T-cell (primary cell): ENCODE measurements at regions of chr20 and their contacts with region 1.

Region 1: GRCh38 chr20:58870239-58871014 is 17.9 kb downstream of the GNAS start:
- DNase-seq: peak in 16 of 35 experiments; percentile 27 to 73 (median 44)
- ATAC-seq: peak; percentile 79 to 83 (median 80)
- H3K4me3 ChIP-seq: no peak overlapping the region
- H3K4me3 Mint-ChIP-seq: no peak overlapping the region
- H3K27ac ChIP-seq: no peak overlapping the region
- H3K27ac Mint-ChIP-seq: no peak overlapping the region
- H3K4me1 ChIP-seq: no peaks in the 10 kb centered on the region
- H3K4me1 Mint-ChIP-seq: peaks cover 0 to 6% (median 5%) of the 10 kb centered on the region in 3 donors
- H3K27me3 ChIP-seq: peaks cover 0 to 4% of the 10 kb centered on the region in 2 experiments
- H3K27me3 Mint-ChIP-seq: peaks cover 2 to 4% of the 10 kb centered on the region in 2 donors

Region 2: DNA sequence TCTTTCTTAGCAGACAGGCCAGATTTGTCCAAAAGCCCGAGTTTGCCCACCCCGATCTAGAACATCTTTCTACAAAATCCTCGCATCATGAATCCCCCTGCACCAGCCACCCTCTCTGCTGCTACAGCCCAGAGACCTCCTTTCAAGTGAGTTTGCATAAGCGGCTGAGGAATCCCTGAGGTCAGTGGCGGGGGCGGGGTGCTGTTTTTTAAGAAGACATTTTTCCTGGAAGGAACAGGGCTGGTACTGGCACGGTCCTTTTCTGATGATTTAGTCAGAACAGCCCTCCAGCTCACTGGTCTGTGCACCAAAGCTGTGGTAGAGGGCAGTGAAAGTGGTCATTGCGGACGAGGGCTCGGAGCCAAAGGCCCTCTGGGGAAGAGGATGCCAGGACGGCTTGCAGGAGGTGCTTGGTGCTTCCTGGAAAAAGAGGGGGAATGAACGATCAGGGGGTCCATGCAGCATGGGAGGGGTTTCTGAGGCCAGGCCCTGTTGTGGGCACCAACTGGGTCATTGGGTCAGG is 70.2 kb before region 1 on chr20:
- CTCF ChIA-PET with region 1: no interaction called
- POLR2A ChIA-PET with region 1: no interaction called
- DNase-seq: no peak
- ATAC-seq: no peak
- H3K4me3 ChIP-seq: no peak overlapping the region
- H3K4me3 Mint-ChIP-seq: no peak overlapping the region
- H3K27ac ChIP-seq: no peak overlapping the region
- H3K27ac Mint-ChIP-seq: no peak overlapping the region
- H3K4me1 ChIP-seq: no peaks in the 10 kb centered on the region
- H3K4me1 Mint-ChIP-seq: no peaks in the 10 kb centered on the region
- H3K27me3 ChIP-seq: peaks cover 0 to 46% of the 10 kb centered on the region in 2 experiments
- H3K27me3 Mint-ChIP-seq: peaks cover 30 to 36% of the 10 kb centered on the region in 2 donors

Region 3: DNA sequence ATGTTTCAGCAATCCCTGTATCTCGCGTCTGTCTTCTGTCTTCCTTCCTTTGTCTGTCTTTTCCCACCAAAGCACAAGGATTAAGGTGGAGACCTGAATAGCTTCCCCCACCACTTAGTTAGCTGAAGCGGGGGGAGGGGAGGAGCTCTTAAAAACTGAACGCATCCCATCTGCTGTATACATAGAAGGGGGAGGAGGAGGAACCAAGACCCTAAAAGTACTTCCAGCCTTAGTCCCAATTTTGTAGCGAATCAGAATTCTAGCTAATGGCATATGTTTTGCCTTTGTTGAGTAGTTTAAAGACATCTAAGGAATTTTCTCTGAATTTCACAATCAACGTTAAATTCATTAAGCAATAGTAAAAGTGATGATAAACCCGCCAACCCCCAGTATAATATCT is 30.0 kb after region 1 on chr20:
- CTCF ChIA-PET with region 1: no interaction called
- POLR2A ChIA-PET with region 1: no interaction called
- DNase-seq: no peak
- ATAC-seq: no peak
- H3K4me3 ChIP-seq: no peak overlapping the region
- H3K4me3 Mint-ChIP-seq: no peak overlapping the region
- H3K27ac ChIP-seq: no peak overlapping the region
- H3K27ac Mint-ChIP-seq: no peak overlapping the region
- H3K4me1 ChIP-seq: peaks cover 6 to 15% of the 10 kb centered on the region in 2 experiments
- H3K4me1 Mint-ChIP-seq: peaks cover 77 to 84% (median 82%) of the 10 kb centered on the region in 3 donors
- H3K27me3 ChIP-seq: no peaks in the 10 kb centered on the region
- H3K27me3 Mint-ChIP-seq: no peaks in the 10 kb centered on the region

Region 4: DNA sequence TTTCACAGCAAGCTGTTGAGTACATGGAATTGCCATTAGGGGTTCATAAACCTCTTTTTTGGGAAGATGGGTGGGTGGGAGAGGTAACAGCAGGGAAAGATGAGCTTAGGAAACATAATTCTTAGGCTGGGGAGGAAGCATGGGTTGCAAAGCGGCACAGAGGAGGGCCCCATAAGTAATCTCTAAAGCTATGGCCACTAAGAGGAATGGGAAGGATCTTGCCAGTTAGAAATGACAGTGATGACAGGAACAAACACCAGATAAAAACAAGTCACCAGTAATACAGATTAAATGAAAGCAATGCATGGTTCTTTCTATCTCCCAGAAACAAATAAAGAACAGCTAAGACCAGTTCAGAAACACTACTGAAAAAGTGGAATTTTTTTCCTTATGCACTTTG is 203.2 kb after region 1 on chr20:
- CTCF ChIA-PET with region 1: interaction called in 1 of 2 experiments, 5 read pairs
- POLR2A ChIA-PET with region 1: interaction called in 1 of 2 experiments, 11 read pairs
- DNase-seq: no peak
- ATAC-seq: no peak
- H3K4me3 ChIP-seq: no peak overlapping the region
- H3K4me3 Mint-ChIP-seq: no peak overlapping the region
- H3K27ac ChIP-seq: no peak overlapping the region
- H3K27ac Mint-ChIP-seq: no peak overlapping the region
- H3K4me1 ChIP-seq: no peaks in the 10 kb centered on the region
- H3K4me1 Mint-ChIP-seq: peaks cover 0 to 6% (median 4%) of the 10 kb centered on the region in 3 donors
- H3K27me3 ChIP-seq: peaks cover 2 to 19% of the 10 kb centered on the region in 2 experiments
- H3K27me3 Mint-ChIP-seq: peaks cover 24 to 36% of the 10 kb centered on the region in 2 donors

Region 5: DNA sequence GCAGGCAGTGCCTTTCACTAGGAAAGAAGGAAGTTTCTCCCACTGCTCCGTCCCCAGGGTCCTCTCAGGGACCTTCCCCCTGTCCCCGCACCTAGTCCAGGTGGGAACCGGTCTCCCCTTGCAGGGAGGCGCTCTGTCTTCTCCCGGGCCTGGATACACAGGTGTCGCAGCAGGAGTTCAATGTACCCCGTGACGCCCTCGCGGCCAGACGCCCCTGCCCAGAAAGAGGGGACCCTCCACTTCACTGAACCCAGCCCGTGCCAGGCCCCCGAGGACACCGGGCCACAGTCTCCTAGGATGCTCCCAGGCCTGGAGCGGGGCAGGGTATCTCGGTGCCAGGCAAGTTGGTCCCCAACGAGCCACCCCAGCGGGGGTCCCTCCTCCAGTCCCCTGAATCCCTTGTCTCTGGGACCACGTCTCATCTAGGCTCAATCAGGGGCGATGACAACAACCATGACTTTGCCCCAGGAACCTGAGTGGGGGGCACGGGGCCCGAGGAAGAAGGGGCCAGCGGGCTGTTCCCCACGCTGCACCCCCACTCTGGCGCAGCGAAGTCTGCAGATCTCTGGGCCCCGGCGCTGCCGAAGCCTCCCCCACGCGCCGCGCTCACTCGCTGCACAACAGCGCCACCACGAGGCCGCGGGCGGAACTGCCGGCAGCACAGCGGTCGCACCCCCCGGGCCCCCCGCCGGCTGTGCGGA is 533.0 kb after region 1 on chr20:
- CTCF ChIA-PET with region 1: interaction called in 1 of 2 experiments, 14 read pairs
- POLR2A ChIA-PET with region 1: no interaction called
- DNase-seq: peak; percentile 16 to 84 (median 71)
- ATAC-seq: peak; percentile 75 to 87 (median 80)
- H3K4me3 ChIP-seq: peak overlapping the region; percentile 23 to 29
- H3K4me3 Mint-ChIP-seq: peak overlapping the region in 1 of 3 donors; percentile 65
- H3K27ac ChIP-seq: no peak overlapping the region
- H3K27ac Mint-ChIP-seq: peak overlapping the region in 1 of 2 donors; percentile 83
- H3K4me1 ChIP-seq: peaks cover 9 to 18% of the 10 kb centered on the region in 2 experiments
- H3K4me1 Mint-ChIP-seq: peaks cover 0 to 8% (median 4%) of the 10 kb centered on the region in 3 donors
- H3K27me3 ChIP-seq: peaks cover 8 to 46% of the 10 kb centered on the region in 2 experiments
- H3K27me3 Mint-ChIP-seq: peaks cover 15 to 34% of the 10 kb centered on the region in 2 donors